ENCODE measurements at regions of chr12 and their contacts with region 1.

Region 1: DNA sequence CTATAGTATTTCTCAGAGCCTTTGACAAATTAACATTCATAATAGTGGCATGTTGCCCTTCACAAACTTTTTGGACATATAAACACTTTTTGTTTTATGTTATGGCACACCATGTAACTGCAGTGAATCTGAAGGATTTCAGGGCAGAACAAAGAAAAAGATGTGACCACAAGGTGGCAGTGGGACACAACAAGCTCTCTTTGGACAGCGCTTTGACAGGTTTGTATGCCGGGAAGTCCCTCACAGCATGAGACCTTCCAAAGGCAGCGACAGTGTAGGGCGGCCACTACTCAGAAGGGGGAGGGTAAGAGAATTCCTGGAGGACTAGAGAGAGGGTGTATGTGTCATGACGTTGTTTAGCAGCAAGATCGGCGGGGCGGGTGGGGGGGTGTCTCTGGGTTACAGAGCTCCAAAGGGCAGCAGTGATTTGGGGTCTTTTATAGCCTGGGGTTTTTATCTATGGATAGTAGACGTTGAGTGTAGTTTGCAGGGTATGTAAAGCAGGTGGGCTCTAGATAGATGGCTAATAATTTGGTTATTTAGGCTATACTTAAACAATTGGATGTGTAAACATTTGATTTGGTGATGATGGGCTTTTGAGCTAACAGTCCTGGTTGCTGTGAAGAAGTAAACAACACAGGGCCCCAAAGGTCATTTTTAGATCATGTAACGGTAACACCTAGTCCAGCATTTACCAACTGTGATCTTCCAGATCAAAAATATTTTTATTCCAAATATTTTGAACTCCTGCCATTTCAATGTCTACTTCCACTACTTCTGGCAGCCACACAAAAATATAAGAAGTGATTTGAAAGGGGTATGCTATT is 22.9 kb downstream of the ETFBKMT start:
- DNase-seq: peak; percentile 37
- ATAC-seq: peak; percentile 79
- H3K4me3 Mint-ChIP-seq: peak overlapping the region; percentile 64
- H3K27ac Mint-ChIP-seq: peak overlapping the region; percentile 91
- H3K4me1 Mint-ChIP-seq: peaks cover 38% of the 10 kb centered on the region
- H3K27me3 Mint-ChIP-seq: no peaks in the 10 kb centered on the region
- CTCF ChIP-seq: peak; percentile 13

Region 2: GRCh38 chr12:31715283-31715825 is 33.0 kb after region 1 on chr12:
- CTCF ChIA-PET with region 1: interaction called, 7 read pairs
- POLR2A ChIA-PET with region 1: interaction called, 43 read pairs
- intact Hi-C with region 1: loop called (anchors 1 kb)
- DNase-seq: no peak
- ATAC-seq: peak; percentile 93
- H3K4me3 Mint-ChIP-seq: peak overlapping the region; percentile 32
- H3K27ac Mint-ChIP-seq: peak overlapping the region; percentile 85
- H3K4me1 Mint-ChIP-seq: peaks cover 58% of the 10 kb centered on the region
- H3K27me3 Mint-ChIP-seq: no peaks in the 10 kb centered on the region
- CTCF ChIP-seq: no peak

Region 3: DNA sequence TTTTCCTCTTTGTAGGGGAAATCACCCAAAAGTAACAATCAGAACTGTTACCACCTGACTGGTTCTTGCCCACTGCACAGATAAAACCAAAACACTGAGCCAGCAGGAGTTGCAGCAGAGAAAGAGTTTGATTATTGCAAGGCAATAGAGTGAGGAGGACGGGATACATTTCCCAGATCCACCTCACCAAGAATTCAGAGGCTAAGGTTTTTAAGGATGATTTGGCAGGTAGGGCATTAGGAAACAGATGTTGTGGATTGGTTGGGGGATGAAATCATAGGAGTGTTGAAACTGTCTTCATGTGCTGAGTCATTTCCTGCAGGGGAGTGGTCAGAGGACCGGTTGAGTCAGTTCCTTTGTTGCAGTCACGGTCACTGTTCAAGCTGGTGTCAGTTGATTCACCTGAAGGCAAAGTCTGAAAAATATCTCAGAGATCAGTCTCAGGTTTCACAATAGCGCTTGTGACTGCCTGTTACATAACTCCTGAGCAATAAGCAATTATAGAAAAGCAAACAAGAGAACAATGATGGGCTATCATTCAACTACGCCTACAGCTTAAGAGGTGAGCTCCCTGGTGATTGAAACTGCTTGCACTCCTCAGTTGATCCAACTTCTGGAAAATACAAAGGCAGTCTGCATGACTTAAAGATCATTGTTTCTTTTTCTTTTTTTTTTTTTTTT is 66.8 kb after region 1 on chr12:
- CTCF ChIA-PET with region 1: no interaction called
- POLR2A ChIA-PET with region 1: interaction called, 31 read pairs
- intact Hi-C with region 1: loop called (anchors 1 kb)
- DNase-seq: no peak
- ATAC-seq: peak; percentile 74
- H3K4me3 Mint-ChIP-seq: peak overlapping the region; percentile 68
- H3K27ac Mint-ChIP-seq: peak overlapping the region; percentile 97
- H3K4me1 Mint-ChIP-seq: peaks cover 78% of the 10 kb centered on the region
- H3K27me3 Mint-ChIP-seq: no peaks in the 10 kb centered on the region
- CTCF ChIP-seq: no peak

Region 4: GRCh38 chr12:31813305-31813704 is 131.0 kb after region 1 on chr12:
- CTCF ChIA-PET with region 1: interaction called, 7 read pairs
- POLR2A ChIA-PET with region 1: interaction called, 32 read pairs
- intact Hi-C with region 1: loop called (anchors 1 kb)
- DNase-seq: no peak
- ATAC-seq: no peak
- H3K4me3 Mint-ChIP-seq: no peak overlapping the region
- H3K27ac Mint-ChIP-seq: peak overlapping the region; percentile 69
- H3K4me1 Mint-ChIP-seq: peaks cover 45% of the 10 kb centered on the region
- H3K27me3 Mint-ChIP-seq: no peaks in the 10 kb centered on the region
- CTCF ChIP-seq: no peak

Region 5: GRCh38 chr12:31874961-31875608 is 192.7 kb after region 1 on chr12:
- CTCF ChIA-PET with region 1: no interaction called
- POLR2A ChIA-PET with region 1: interaction called, 7 read pairs
- intact Hi-C with region 1: loop called (anchors 5 kb)
- DNase-seq: peak; percentile 45
- ATAC-seq: peak; percentile 85
- H3K4me3 Mint-ChIP-seq: peak overlapping the region; percentile 77
- H3K27ac Mint-ChIP-seq: peak overlapping the region; percentile 100
- H3K4me1 Mint-ChIP-seq: peaks cover 77% of the 10 kb centered on the region
- H3K27me3 Mint-ChIP-seq: no peaks in the 10 kb centered on the region
- CTCF ChIP-seq: no peak

Region 6: DNA sequence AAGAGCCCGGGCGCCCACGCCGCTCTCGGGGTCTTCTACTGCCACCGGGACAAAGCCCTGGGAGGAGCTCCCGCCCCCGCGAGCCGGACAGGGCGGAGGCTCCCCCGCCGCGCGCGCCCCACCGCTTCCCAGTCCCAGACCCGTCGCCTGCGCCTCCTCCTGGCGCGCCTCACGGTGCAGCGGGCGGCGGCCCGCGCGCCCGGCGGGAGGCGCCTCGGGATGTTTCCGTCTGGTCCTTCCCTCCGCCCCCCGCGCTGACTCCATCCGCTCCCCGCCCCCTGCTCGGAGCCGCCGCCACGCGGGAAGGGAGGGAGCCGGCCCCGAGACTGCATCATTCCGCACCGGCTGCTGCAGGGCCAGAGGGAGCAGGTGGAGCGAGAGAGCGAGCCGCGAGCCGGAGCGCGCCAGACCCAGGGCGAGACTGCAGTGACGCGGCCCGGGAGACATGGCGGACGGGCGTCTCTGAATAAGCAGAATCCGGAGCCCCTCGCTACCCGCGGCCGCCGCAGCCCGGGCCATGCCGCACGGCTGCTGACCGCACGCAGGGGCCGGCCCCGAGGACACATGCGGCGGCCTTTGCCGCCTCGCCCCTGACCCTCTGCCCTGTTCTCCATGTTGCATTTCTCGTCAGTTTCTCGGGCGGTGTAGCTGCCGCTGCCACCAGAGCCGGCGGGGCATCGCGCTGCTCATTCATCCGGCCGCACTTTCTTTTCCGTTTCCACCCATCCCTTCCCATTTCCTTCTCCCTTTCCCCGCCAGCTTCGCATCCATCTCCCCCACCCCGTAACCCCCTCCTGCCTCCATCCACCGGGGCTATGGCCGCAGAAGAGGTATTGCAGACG is 424.4 kb after region 1 on chr12 and contains the start of gene BICD1:
- CTCF ChIA-PET with region 1: no interaction called
- POLR2A ChIA-PET with region 1: interaction called, 4 read pairs
- intact Hi-C with region 1: loop called (anchors 1 kb)
- DNase-seq: peak; percentile 69
- ATAC-seq: peak; percentile 78
- H3K4me3 Mint-ChIP-seq: peak within 1 kb of the TSS; percentile 95
- H3K27ac Mint-ChIP-seq: peak within 1 kb of the TSS; percentile 95
- H3K4me1 Mint-ChIP-seq: peaks cover 28% of the 10 kb centered on the region
- H3K27me3 Mint-ChIP-seq: no peaks in the 10 kb centered on the region
- CTCF ChIP-seq: no peak
- total RNA-seq, gene BICD1: 55.5 and 67.6 TPM in 2 replicates

Region 7: DNA sequence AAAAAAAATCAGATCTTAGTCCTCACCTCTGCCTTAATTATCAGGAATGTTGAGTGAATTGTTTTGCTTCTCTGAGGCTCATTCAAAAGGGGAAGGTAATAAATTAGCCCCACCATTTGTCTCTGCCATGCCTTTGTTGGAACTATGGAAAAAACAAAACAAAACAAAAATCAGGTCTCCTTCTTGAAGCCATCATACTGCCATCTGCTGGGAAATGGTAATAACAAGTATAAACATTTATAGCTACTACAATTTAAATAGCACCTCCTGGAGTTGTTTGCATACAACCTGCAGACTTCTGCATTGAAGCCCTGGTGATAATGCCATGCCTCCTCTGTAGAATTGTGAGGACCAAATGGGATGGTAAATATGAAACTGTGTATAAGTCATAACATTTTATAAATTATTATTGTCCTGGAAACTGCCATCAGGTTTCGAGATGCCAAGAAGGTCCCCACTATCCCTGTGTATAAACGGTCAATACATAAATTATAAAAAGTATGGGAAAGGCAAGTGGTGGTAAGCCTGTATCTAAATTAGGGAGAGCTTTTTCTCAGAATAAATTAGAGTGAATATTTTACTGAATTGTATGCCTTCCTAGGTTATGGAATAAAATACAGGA is 629.8 kb after region 1 on chr12:
- CTCF ChIA-PET with region 1: interaction called, 5 read pairs
- POLR2A ChIA-PET with region 1: no interaction called
- intact Hi-C with region 1: loop called (anchors 1 kb)
- DNase-seq: no peak
- ATAC-seq: peak; percentile 62
- H3K4me3 Mint-ChIP-seq: no peak overlapping the region
- H3K27ac Mint-ChIP-seq: peak overlapping the region; percentile 68
- H3K4me1 Mint-ChIP-seq: peaks cover 8% of the 10 kb centered on the region
- H3K27me3 Mint-ChIP-seq: no peaks in the 10 kb centered on the region
- CTCF ChIP-seq: no peak

Measured in activated B cell treated with CpG ODN at 0.5 μM for 24 hours (primary cell).